CD14-positive monocyte (primary cell): ENCODE measurements at regions of chr6 and their contacts with region 1.

Region 1: DNA sequence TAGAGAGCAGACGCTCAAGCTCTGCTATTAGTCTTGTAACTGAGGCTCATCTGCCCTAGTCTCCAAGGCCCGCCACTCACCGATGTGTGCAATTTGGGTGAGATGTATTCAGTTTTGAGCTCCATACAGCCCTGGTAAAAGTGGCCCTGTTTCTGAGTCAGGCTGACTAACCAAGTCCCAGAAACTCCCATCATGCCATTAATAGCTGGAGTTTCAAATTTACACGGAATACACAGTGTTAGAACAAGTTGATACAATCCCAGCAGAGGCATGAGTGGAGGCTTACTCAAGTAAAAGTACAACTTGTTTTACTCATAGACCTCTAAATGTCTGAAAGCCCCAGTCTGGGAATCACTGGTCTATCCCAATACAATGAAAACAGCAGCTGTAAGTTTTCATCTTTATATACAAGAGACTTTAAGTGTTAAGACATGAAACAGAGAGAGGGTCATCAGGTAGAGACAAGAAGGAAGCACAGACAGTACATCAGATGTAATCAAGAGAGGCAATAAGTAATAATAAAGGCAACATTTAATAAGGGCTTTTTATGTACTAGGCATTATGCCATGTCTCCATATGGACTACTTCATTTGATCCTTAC is 42.4 kb downstream of the RTN4IP1 start:
- DNase-seq: no peak
- H3K4me3 ChIP-seq: no peak overlapping the region
- H3K4me3 Mint-ChIP-seq: no peak overlapping the region
- H3K27ac ChIP-seq: no peak overlapping the region
- H3K27ac Mint-ChIP-seq: no peak overlapping the region
- H3K4me1 ChIP-seq: no peaks in the 10 kb centered on the region
- H3K4me1 Mint-ChIP-seq: no peaks in the 10 kb centered on the region
- H3K27me3 ChIP-seq: no peaks in the 10 kb centered on the region
- H3K27me3 Mint-ChIP-seq: no peaks in the 10 kb centered on the region
- CTCF ChIP-seq: no peak

Region 2: DNA sequence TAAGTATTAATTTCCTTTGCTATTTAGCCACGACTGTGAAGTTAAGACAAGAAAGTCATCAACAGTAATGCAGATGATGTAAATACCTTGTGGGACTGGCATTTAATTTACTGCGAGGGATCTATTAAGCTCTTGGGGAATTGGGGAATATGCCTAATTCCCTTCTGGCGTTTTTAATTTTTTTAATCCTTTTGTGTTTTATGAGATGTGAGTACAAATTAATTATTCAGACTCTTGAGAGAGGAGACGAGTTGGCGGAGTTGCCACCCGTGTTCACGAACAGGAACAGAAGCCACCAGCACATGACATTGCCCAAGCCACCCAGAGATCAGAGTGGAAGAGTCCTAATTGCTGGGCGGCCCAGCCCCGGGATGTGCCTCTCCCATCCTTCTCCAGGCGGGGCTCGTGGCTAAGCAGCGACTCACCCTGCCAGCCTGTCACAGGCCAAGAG is 226.9 kb before region 1 on chr6:
- intact Hi-C with region 1: loop called in 1 of 2 experiments (anchors 10 kb)
- DNase-seq: no peak
- H3K4me3 ChIP-seq: peak overlapping the region in 1 of 3 experiments; percentile 74
- H3K4me3 Mint-ChIP-seq: peak overlapping the region; percentile 64 to 82
- H3K27ac ChIP-seq: no peak overlapping the region
- H3K27ac Mint-ChIP-seq: no peak overlapping the region
- H3K4me1 ChIP-seq: peaks cover 13 to 17% of the 10 kb centered on the region in 2 donors
- H3K4me1 Mint-ChIP-seq: peaks cover 12% of the 10 kb centered on the region
- H3K27me3 ChIP-seq: peaks cover 21 to 59% of the 10 kb centered on the region in 2 donors
- H3K27me3 Mint-ChIP-seq: peaks cover 37 to 70% (median 52%) of the 10 kb centered on the region in 3 donors
- CTCF ChIP-seq: no peak

Region 3: GRCh38 chr6:106546691-106547414 is 40.1 kb before region 1 on chr6:
- intact Hi-C with region 1: no loop called
- DNase-seq: peak; percentile 69 to 87 (median 80)
- H3K4me3 ChIP-seq: peak overlapping the region in 1 of 3 experiments; percentile 7
- H3K4me3 Mint-ChIP-seq: peak overlapping the region; percentile 4 to 33
- H3K27ac ChIP-seq: peak overlapping the region; percentile 88 to 94
- H3K27ac Mint-ChIP-seq: peak overlapping the region; percentile 89 to 97 (median 93)
- H3K4me1 ChIP-seq: peaks cover 55 to 64% of the 10 kb centered on the region in 2 donors
- H3K4me1 Mint-ChIP-seq: peaks cover 66% of the 10 kb centered on the region
- H3K27me3 ChIP-seq: no peaks in the 10 kb centered on the region
- H3K27me3 Mint-ChIP-seq: no peaks in the 10 kb centered on the region
- CTCF ChIP-seq: no peak

Region 4: GRCh38 chr6:106979427-106979884 is 392.5 kb after region 1 on chr6:
- intact Hi-C with region 1: loop called in 1 of 2 experiments (anchors 10 kb)
- DNase-seq: peak; percentile 69 to 74 (median 70)
- H3K4me3 ChIP-seq: no peak overlapping the region
- H3K4me3 Mint-ChIP-seq: peak overlapping the region in 1 of 2 donors; percentile 26
- H3K27ac ChIP-seq: no peak overlapping the region
- H3K27ac Mint-ChIP-seq: no peak overlapping the region
- H3K4me1 ChIP-seq: peaks cover 7 to 12% of the 10 kb centered on the region in 2 donors
- H3K4me1 Mint-ChIP-seq: peaks cover 4% of the 10 kb centered on the region
- H3K27me3 ChIP-seq: peaks cover 22 to 36% of the 10 kb centered on the region in 2 donors
- H3K27me3 Mint-ChIP-seq: peaks cover 31 to 51% (median 38%) of the 10 kb centered on the region in 3 donors
- CTCF ChIP-seq: peak; percentile 87